ENCODE measurements at regions of chrX and their contacts with region 1.

Region 1: DNA sequence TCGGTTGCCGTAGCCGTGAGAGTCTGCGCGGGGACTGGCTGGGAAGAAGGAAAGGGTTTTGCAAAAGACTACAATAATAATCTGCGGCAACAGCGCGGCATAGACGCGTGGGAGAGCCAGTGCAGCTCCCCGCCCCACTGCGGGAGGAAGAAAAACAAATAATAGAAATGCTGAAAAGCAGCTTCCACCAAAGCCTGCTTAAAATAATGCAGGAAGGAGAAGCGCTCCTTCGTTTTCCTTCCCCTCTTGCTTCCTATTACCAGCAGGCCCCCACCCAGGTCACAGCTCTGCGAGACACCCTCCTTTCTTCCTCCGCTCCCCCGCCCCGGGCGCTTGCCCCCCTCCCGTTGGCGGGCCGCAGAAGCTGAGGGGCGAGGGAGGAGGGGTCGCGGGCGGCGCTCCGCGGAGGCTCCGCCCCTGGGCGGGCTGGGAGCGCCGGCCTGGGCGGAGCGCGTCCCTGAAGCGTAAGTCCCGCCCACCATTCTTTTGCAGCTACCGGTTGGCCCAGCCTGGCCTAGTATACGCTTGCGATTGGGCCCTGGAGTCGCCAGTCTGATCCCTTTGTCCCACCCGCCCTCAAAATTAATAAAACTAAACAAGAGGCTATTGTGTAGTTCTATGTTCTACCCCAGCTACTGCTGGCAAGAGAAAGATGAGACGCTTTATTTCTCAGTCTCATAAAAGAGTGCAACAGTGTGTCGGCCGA is 636 bp upstream of the AMOT start:
- DNase-seq: peak; percentile 77 to 83
- ATAC-seq: peak; percentile 84 to 85
- H3K4me3 ChIP-seq: peak overlapping the region; percentile 58 to 87 (median 77)
- H3K27ac ChIP-seq: peak overlapping the region; percentile 73 to 94 (median 88)
- H3K4me1 ChIP-seq: peaks cover 4 to 7% of the 10 kb centered on the region in 2 donors
- H3K27me3 ChIP-seq: no peaks in the 10 kb centered on the region
- CTCF ChIP-seq: no peak
- POLR2A ChIP-seq: peak in 1 of 2 donors; percentile 18

Region 2: GRCh38 chrX:112654871-112655270 is 186.4 kb before region 1 on chrX:
- in situ Hi-C with region 1: no loop called
- intact Hi-C with region 1: no loop called
- DNase-seq: no peak
- ATAC-seq: no peak
- H3K4me3 ChIP-seq: no peak overlapping the region
- H3K27ac ChIP-seq: no peak overlapping the region
- H3K4me1 ChIP-seq: no peaks in the 10 kb centered on the region
- H3K27me3 ChIP-seq: no peaks in the 10 kb centered on the region
- CTCF ChIP-seq: no peak
- POLR2A ChIP-seq: no peak

Region 3: GRCh38 chrX:112769034-112769433 is 72.2 kb before region 1 on chrX:
- in situ Hi-C with region 1: no loop called
- intact Hi-C with region 1: loop called (anchors 5 kb)
- DNase-seq: no peak
- ATAC-seq: peak; percentile 70 to 96
- H3K4me3 ChIP-seq: no peak overlapping the region
- H3K27ac ChIP-seq: peak overlapping the region; percentile 5 to 70 (median 30)
- H3K4me1 ChIP-seq: no peaks in the 10 kb centered on the region
- H3K27me3 ChIP-seq: no peaks in the 10 kb centered on the region
- CTCF ChIP-seq: no peak
- POLR2A ChIP-seq: no peak

Region 4: DNA sequence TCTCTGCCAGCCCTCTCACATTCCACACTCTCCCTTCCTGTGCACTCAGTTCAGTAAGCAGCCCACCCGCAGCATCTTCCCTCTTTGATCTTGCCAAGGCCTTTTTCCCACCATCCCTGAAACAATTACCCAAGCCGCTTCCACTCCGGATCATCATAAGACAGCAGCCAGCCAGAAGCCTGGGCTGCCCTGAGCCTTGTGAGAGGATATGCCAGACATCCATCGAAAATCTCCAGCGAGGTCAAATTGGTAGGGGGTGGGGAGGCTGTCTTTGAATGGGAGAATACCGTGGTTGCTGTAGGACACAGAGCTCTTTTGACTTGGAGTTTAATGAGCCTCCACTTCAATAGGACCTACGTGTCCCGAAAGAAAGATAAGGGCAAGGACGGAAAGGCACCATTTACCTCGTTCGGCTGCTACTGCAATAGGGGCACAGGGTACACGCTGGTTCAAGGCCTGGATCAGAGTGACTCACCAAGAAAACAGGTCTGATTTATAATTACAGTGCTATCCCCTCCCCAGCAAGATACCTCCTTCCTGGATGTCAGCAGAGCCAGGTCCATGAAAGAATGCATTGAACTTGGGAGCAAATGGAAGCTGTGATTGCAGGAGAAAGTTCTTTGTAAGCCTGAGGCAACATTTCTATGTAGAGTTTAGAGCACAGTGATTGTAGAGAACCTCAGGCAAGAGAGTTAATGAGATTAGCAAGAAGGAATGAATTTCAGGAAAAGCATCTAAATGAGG is 40.1 kb before region 1 on chrX:
- in situ Hi-C with region 1: no loop called
- intact Hi-C with region 1: loop called (anchors 5 kb)
- DNase-seq: no peak
- ATAC-seq: no peak
- H3K4me3 ChIP-seq: no peak overlapping the region
- H3K27ac ChIP-seq: peak overlapping the region in 3 of 4 donors; percentile 64 to 77 (median 73)
- H3K4me1 ChIP-seq: peaks cover 0 to 12% of the 10 kb centered on the region in 2 donors
- H3K27me3 ChIP-seq: no peaks in the 10 kb centered on the region
- CTCF ChIP-seq: no peak
- POLR2A ChIP-seq: no peak

Region 5: GRCh38 chrX:112941209-112941788 is 100.0 kb after region 1 on chrX:
- in situ Hi-C with region 1: no loop called
- intact Hi-C with region 1: no loop called
- DNase-seq: no peak
- ATAC-seq: peak in 1 of 2 donors; percentile 50
- H3K4me3 ChIP-seq: peak overlapping the region in 2 of 4 donors; percentile 5 to 27
- H3K27ac ChIP-seq: no peak overlapping the region
- H3K4me1 ChIP-seq: no peaks in the 10 kb centered on the region
- H3K27me3 ChIP-seq: no peaks in the 10 kb centered on the region
- CTCF ChIP-seq: no peak
- POLR2A ChIP-seq: no peak

Region 6: DNA sequence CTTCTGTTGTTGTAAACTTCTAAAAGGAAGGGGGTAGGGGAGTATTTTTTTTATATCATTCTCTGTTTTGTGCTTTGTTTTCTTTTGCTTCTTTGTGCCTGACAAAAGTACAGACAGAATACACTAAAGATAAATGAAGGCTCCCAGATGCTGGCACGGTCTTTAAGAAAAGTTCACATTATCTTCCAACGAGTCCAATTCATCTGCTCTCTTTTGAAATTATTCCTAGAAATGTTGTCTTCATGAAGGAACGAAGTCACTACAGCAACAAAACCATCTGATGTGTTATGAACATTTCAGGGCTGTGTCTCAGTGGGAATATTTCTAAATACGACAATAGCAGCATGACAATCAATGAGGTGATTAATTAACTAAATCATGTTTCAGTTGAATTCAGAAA is 928.8 kb after region 1 on chrX:
- in situ Hi-C with region 1: no loop called
- intact Hi-C with region 1: no loop called
- DNase-seq: no peak
- ATAC-seq: no peak
- H3K4me3 ChIP-seq: no peak overlapping the region
- H3K27ac ChIP-seq: no peak overlapping the region
- H3K4me1 ChIP-seq: no peaks in the 10 kb centered on the region
- H3K27me3 ChIP-seq: no peaks in the 10 kb centered on the region
- CTCF ChIP-seq: no peak
- POLR2A ChIP-seq: no peak

Measured in gastrocnemius medialis (tissue), 4 donors.